ENCODE measurements at regions of chr17 and their contacts with region 1.

Region 1: GRCh38 chr17:7931709-7932482 is at the starts of genes CNTROB and TRAPPC1:
- DNase-seq: peak; percentile 100
- ATAC-seq: peak; percentile 99
- H3K4me3 Mint-ChIP-seq: peak within 1 kb of the TSS; percentile 95
- H3K27ac Mint-ChIP-seq: peak within 1 kb of the TSS; percentile 96
- H3K4me1 Mint-ChIP-seq: peaks cover 44% of the 10 kb centered on the region
- H3K27me3 Mint-ChIP-seq: no peaks in the 10 kb centered on the region
- total RNA-seq, gene CNTROB: 53.0 to 80.5 TPM
- total RNA-seq, gene TRAPPC1: 166 to 169 TPM

Region 2: GRCh38 chr17:7403977-7404736 is 527.7 kb before region 1 on chr17 and contains the start of gene TMEM256:
- CTCF ChIA-PET with region 1: no interaction called
- POLR2A ChIA-PET with region 1: no interaction called
- intact Hi-C with region 1: loop called in 1 of 2 experiments (anchors 2 kb)
- DNase-seq: peak; percentile 99
- ATAC-seq: peak; percentile 94
- H3K4me3 Mint-ChIP-seq: peak within 1 kb of the TSS; percentile 89
- H3K27ac Mint-ChIP-seq: peak within 1 kb of the TSS; percentile 92
- H3K4me1 Mint-ChIP-seq: peaks cover 16% of the 10 kb centered on the region
- H3K27me3 Mint-ChIP-seq: peaks cover 2% of the 10 kb centered on the region
- total RNA-seq, gene TMEM256: 55.8 to 58.1 TPM

Region 3: GRCh38 chr17:7856883-7857723 is 74.8 kb before region 1 on chr17 and contains the start of gene NAA38:
- CTCF ChIA-PET with region 1: interaction called, 4 read pairs
- POLR2A ChIA-PET with region 1: interaction called, 3 read pairs
- intact Hi-C with region 1: loop called in 1 of 2 experiments (anchors 1 kb)
- DNase-seq: peak; percentile 97
- ATAC-seq: peak; percentile 91
- H3K4me3 Mint-ChIP-seq: no peak within 1 kb of the TSS
- H3K27ac Mint-ChIP-seq: no peak within 1 kb of the TSS
- H3K4me1 Mint-ChIP-seq: peaks cover 18% of the 10 kb centered on the region
- H3K27me3 Mint-ChIP-seq: no peaks in the 10 kb centered on the region
- total RNA-seq, gene NAA38: 64.7 to 79.8 TPM

Region 4: DNA sequence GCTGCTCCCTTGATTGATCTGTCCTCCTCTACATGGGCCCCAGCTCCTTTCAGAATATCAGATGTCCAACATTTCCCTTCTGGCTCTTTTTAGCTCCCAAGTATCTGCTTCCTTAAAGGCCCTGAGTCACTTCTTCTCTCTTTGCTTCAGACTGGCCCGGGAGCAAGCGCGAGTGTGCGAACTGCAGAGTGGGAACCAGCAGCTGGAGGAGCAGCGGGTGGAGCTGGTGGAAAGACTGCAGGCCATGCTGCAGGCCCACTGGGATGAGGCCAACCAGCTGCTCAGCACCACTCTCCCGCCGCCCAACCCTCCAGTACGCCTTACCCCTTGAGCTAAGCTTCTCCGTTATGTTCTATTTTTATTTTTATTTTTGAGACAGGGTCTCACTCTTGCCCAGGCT is 12.4 kb after region 1 on chr17:
- CTCF ChIA-PET with region 1: interaction called, 25 read pairs
- POLR2A ChIA-PET with region 1: interaction called, 4 read pairs
- intact Hi-C with region 1: no loop called
- DNase-seq: no peak
- ATAC-seq: no peak
- H3K4me3 Mint-ChIP-seq: no peak overlapping the region
- H3K27ac Mint-ChIP-seq: no peak overlapping the region
- H3K4me1 Mint-ChIP-seq: no peaks in the 10 kb centered on the region
- H3K27me3 Mint-ChIP-seq: no peaks in the 10 kb centered on the region

Region 5: DNA sequence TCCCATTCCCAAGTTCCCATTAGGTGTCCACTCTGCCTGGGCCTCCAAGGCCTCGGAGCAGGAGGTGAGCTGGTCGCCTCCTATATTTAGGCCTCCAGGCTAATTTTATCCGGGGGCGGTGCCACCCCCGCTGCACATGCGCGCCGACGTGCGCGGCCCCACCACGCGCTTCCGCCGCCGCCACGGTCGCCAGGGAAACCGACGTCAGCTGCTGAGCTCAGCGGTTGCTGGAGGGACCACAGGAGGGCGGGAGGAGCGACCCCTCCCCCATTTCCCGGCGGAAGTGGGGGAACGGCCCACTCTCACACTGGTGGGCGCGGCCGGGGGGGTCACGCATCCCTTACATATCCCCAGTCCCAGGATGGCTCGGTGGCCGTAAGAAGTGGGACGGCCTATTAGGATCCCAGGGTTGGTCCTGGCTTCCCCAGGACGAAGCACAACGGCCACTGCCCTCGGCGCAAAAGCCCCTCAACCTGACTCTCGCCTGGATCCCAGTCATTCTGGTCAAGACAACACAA is 219.3 kb after region 1 on chr17:
- CTCF ChIA-PET with region 1: no interaction called
- POLR2A ChIA-PET with region 1: no interaction called
- intact Hi-C with region 1: loop called in 1 of 2 experiments (anchors 5 kb)
- DNase-seq: peak; percentile 93
- ATAC-seq: peak; percentile 35
- H3K4me3 Mint-ChIP-seq: no peak overlapping the region
- H3K27ac Mint-ChIP-seq: peak overlapping the region; percentile 80
- H3K4me1 Mint-ChIP-seq: peaks cover 30% of the 10 kb centered on the region
- H3K27me3 Mint-ChIP-seq: no peaks in the 10 kb centered on the region

Measured in activated CD4-positive, alpha-beta T cell treated with anti-CD3 and anti-CD28 coated beads for 36 hours (primary cell).